H1 (cell line): ENCODE measurements at regions of chr11 and their contacts with region 1.

Region 1: DNA sequence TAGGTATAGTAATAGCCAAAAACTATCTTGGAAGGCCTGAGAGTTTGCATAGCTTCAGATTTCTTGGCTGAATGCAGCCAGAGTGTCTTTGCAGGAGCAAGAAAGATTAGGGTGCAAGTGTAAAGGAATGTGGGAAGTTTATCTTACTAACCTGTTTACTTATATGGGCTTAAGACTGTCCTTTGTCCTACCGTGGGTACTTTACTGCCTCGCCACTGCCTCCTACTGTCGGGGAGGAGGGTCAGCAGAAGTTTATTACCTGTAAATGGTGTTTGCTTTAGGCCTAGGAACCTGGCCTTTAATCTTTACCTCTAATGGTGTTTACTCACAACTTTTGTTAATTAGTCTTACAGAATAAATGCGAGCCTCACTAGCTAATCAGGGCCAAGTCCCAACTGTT is 633.8 kb downstream of the DLG2 start:
- DNase-seq: peak; percentile 7 to 63
- H3K4me3 ChIP-seq: no peak overlapping the region
- H3K27ac ChIP-seq: no peak overlapping the region
- H3K4me1 ChIP-seq: peaks cover 0 to 2% (median 0%) of the 10 kb centered on the region in 4 experiments; a peak in 1 of 7 replicates
- H3K27me3 ChIP-seq: no peaks in the 10 kb centered on the region
- CTCF ChIP-seq: peak; percentile 60 to 74 (median 66)
- EP300 ChIP-seq: no peak
- POLR2A ChIP-seq: no peak
- RAD21 ChIP-seq: peak; percentile 75 to 76

Region 2: GRCh38 chr11:84780689-84781293 is 212.6 kb before region 1 on chr11:
- CTCF ChIA-PET with region 1: interaction called, 16 read pairs
- POLR2A ChIA-PET with region 1: no interaction called
- DNase-seq: no peak
- H3K4me3 ChIP-seq: no peak overlapping the region
- H3K27ac ChIP-seq: no peak overlapping the region
- H3K4me1 ChIP-seq: no peaks in the 10 kb centered on the region
- H3K27me3 ChIP-seq: no peaks in the 10 kb centered on the region
- CTCF ChIP-seq: peak in 2 of 3 experiments; percentile 43 to 52; a peak in 2 of 4 replicates
- EP300 ChIP-seq: no peak
- POLR2A ChIP-seq: no peak
- RAD21 ChIP-seq: peak; percentile 73

Region 3: DNA sequence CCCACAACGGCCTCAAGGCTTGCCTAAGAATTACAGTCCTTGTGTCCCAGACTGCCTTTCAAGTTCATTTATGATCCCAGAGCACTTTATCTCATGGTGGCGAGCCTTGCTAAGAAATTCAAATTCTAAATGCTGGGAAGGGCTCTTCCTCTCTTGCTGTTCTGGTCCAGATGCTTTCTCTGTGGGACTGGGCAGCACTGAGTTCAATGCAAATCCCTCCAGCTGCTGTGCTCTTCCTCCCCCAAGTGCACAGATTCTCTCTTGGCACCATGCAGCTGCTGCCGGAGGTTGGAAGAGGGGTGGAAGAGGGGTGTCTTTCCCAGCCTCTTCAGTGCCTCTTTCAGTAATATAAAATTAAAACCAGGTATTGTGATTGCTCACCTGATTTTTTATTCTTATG is 194.3 kb before region 1 on chr11:
- CTCF ChIA-PET with region 1: interaction called, 10 read pairs
- POLR2A ChIA-PET with region 1: no interaction called
- DNase-seq: no peak
- H3K4me3 ChIP-seq: no peak overlapping the region
- H3K27ac ChIP-seq: no peak overlapping the region
- H3K4me1 ChIP-seq: no peaks in the 10 kb centered on the region
- H3K27me3 ChIP-seq: no peaks in the 10 kb centered on the region
- CTCF ChIP-seq: no peak
- EP300 ChIP-seq: no peak
- POLR2A ChIP-seq: no peak
- RAD21 ChIP-seq: no peak

Region 4: DNA sequence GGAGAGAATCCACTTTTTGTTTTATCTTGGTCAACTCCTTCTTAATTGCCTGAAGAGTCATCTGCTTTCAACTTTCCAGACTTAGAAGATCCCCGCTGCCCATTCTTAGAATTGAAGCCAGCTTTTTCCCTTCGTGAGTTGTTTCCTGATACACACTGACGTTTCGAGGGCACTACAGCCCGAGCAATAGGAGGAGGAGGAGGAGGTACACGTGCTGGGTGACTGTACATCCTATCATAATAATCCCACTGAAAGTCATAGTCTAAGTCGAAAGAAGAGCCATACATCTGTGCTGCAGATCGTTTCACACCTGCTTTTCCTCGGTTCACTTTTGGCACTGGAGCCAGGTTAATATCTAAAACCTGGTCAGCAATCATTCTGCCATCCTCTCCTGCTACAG is 27.7 kb after region 1 on chr11:
- CTCF ChIA-PET with region 1: interaction called, 25 read pairs
- POLR2A ChIA-PET with region 1: no interaction called
- DNase-seq: no peak
- H3K4me3 ChIP-seq: no peak overlapping the region
- H3K27ac ChIP-seq: no peak overlapping the region
- H3K4me1 ChIP-seq: no peaks in the 10 kb centered on the region; a peak in 1 of 7 replicates
- H3K27me3 ChIP-seq: no peaks in the 10 kb centered on the region
- CTCF ChIP-seq: no peak
- EP300 ChIP-seq: no peak
- POLR2A ChIP-seq: no peak
- RAD21 ChIP-seq: no peak

Region 5: GRCh38 chr11:85590848-85591483 is 597.6 kb after region 1 on chr11:
- CTCF ChIA-PET with region 1: interaction called, 12 read pairs
- POLR2A ChIA-PET with region 1: no interaction called
- DNase-seq: no peak
- H3K4me3 ChIP-seq: no peak overlapping the region
- H3K27ac ChIP-seq: no peak overlapping the region
- H3K4me1 ChIP-seq: no peaks in the 10 kb centered on the region; a peak in 3 of 7 replicates
- H3K27me3 ChIP-seq: no peaks in the 10 kb centered on the region
- CTCF ChIP-seq: peak in 2 of 3 experiments; percentile 22 to 40; a peak in 2 of 4 replicates
- EP300 ChIP-seq: no peak
- POLR2A ChIP-seq: no peak
- RAD21 ChIP-seq: peak; percentile 75 to 79